Colonic mucosa (tissue), 4 donors: ENCODE measurements at regions of chr1 and their contacts with region 1.

Region 1: DNA sequence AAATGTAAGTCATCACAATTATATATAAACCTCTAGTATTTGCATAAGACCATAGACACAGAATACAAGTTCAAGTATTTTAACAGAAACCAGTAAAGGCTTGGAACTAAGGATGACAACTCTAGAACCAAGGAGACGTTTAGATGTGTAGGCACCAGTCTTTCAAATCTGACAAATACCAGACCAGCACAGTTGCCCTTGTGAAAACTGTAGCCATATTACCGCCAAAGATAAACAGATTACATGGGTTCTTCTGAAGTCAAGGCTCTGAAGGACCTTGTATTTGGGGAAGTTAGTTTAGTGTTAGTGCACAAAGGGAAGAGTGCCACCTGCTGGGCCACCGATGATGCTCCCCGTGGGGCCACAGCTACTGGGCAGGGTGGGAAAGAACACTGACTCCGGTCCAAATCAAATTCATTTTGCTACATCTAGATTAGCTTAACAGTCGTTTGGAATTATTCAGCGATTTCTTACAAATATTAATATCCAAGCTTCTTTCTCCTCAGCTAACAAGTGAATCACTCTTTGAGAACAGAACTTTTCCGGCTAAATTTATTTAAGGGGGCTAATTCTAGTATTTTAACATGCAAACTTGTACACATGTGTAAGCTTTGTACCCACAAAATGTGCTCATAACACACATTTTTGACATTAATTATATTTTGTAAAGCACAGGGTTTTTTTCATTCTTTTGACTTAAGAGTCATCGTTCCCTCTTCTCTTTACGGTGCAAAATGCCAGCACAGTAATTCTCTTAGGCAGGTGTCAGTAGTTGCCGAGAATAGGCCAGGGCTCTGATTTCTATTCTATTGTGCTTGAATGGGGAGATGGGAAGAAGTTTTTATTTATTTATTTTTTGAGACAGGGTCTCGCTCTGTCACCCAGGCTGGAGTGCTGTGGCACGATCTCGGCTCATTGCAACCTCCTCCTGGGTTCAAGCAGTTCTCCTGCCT is 8.0 kb upstream of the NIBAN1 start:
- DNase-seq: peak; percentile 73
- H3K4me3 ChIP-seq: no peak overlapping the region
- H3K27ac ChIP-seq: no peak overlapping the region
- H3K4me1 ChIP-seq: no peaks in the 10 kb centered on the region
- H3K27me3 ChIP-seq: no peaks in the 10 kb centered on the region
- CTCF ChIP-seq: peak; percentile 93

Region 2: GRCh38 chr1:184805667-184806295 is 176.5 kb before region 1 on chr1:
- intact Hi-C with region 1: loop called (anchors 1 kb)
- DNase-seq: peak; percentile 93
- H3K4me3 ChIP-seq: no peak overlapping the region
- H3K27ac ChIP-seq: no peak overlapping the region
- H3K4me1 ChIP-seq: no peaks in the 10 kb centered on the region
- H3K27me3 ChIP-seq: no peaks in the 10 kb centered on the region
- CTCF ChIP-seq: peak; percentile 94

Region 3: GRCh38 chr1:185156854-185157598 is 174.7 kb after region 1 on chr1 and contains the starts of genes SWT1 and TRMT1L:
- intact Hi-C with region 1: no loop called
- DNase-seq: peak; percentile 100
- H3K4me3 ChIP-seq: peak within 1 kb of the TSS; percentile 77
- H3K27ac ChIP-seq: peak within 1 kb of the TSS; percentile 97
- H3K4me1 ChIP-seq: no peaks in the 10 kb centered on the region
- H3K27me3 ChIP-seq: no peaks in the 10 kb centered on the region
- CTCF ChIP-seq: no peak
- total RNA-seq, gene SWT1: 3.4 to 5.7 TPM
- total RNA-seq, gene TRMT1L: 14.8 to 20.1 TPM

Region 4: DNA sequence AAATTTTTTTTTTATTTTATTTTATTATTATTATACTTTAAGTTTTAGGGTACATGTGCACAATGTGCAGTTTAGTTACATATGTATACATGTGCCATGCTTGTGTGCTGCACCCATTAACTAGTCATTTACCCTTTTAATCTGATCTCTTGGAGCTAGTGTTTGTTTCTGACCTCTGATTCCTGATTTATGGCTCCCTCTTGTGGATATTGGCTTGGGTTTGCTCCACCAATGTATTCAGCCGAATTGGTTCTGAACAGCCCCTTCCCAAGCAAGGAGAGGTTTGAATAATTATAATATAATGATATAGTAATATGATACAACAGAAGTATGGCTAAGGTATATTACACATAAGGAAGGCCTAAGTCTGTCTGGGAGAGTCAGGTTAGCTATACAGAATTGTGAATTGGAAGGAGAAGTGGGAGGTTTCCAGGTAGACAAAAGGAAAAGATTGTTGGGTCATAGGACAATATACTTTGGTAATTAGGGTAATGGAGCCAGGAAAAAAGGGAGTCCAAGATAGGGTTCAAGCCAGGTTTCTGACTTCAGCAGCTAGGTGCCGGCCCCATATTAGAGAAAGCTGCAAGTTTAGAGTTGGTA is 698.9 kb after region 1 on chr1:
- intact Hi-C with region 1: loop called (anchors 10 kb)
- DNase-seq: peak; percentile 47
- H3K4me3 ChIP-seq: no peak overlapping the region
- H3K27ac ChIP-seq: no peak overlapping the region
- H3K4me1 ChIP-seq: no peaks in the 10 kb centered on the region
- H3K27me3 ChIP-seq: no peaks in the 10 kb centered on the region
- CTCF ChIP-seq: peak; percentile 53